Left ventricle myocardium inferior (tissue), 1 donor: ENCODE measurements at regions of chr11 and their contacts with region 1.

Region 1: GRCh38 chr11:65516135-65516935 is 8.5 kb upstream of the SCYL1 start:
- DNase-seq: peak; percentile 8
- H3K4me3 ChIP-seq: no peak overlapping the region
- H3K27ac ChIP-seq: no peak overlapping the region
- H3K4me1 ChIP-seq: no peaks in the 10 kb centered on the region
- H3K27me3 ChIP-seq: no peaks in the 10 kb centered on the region
- CTCF ChIP-seq: no peak

Region 2: GRCh38 chr11:65373839-65374580 is 142.3 kb before region 1 on chr11:
- intact Hi-C with region 1: loop called (anchors 5 kb)
- DNase-seq: no peak
- H3K4me3 ChIP-seq: no peak overlapping the region
- H3K27ac ChIP-seq: no peak overlapping the region
- H3K4me1 ChIP-seq: peaks cover 34% of the 10 kb centered on the region
- H3K27me3 ChIP-seq: no peaks in the 10 kb centered on the region
- CTCF ChIP-seq: no peak

Region 3: DNA sequence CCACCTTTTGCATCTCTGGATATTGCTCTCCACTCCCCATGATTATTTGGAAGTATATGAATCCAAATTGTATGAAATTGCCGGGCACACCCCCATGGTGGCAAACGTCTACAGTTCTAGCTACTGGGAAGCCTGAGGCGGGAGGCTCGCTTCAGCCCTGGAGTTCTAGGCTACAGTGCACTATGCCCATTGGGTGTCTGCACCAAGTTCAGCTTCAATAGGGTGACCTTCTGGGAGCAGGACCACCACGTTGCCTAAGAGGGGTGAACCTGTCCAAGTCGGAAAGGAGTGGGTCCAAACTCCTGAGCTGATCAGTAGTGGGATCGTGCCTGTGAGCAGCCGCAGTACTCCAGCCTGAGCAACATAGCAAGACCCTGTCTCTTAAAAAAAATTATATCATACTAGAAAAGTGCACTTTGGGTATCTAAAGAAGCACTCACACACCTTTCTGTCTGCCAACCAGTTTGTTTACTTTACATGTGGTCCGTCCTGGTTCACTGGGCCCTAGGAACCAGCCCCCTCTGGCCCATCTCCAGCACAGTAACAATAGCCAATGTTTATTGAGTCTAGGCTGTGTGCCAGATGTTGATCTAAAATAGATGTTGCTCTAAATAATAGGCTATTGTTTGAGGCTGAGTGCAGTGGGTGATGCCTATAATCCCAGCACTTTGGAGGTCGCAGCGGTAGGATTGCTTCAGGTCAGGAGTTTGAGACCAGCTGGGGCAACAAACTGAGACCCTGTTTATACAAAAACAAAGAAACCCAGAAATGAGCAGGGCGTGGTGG is 179.3 kb after region 1 on chr11:
- intact Hi-C with region 1: no loop called
- DNase-seq: no peak
- H3K4me3 ChIP-seq: no peak overlapping the region
- H3K27ac ChIP-seq: peak overlapping the region; percentile 58
- H3K4me1 ChIP-seq: peaks cover 18% of the 10 kb centered on the region
- H3K27me3 ChIP-seq: no peaks in the 10 kb centered on the region
- CTCF ChIP-seq: no peak